A549 (cell line): ENCODE measurements at regions of chr20 and their contacts with region 1.

Region 1: GRCh38 chr20:50070991-50071888 is 41.7 kb downstream of the UBE2V1 start:
- DNase-seq: peak; percentile 81 to 88
- ATAC-seq: peak; percentile 96 to 97
- H3K4me3 ChIP-seq: peak overlapping the region; percentile 38
- H3K27ac ChIP-seq: peak overlapping the region; percentile 81 to 89
- H3K4me1 ChIP-seq: peaks cover 19% of the 10 kb centered on the region; the same call in 2 of the 3 replicates
- CTCF ChIP-seq: peak; percentile 98
- EP300 ChIP-seq: no peak
- POLR2A ChIP-seq: no peak
- RAD21 ChIP-seq: peak; percentile 99 to 100

Region 2: DNA sequence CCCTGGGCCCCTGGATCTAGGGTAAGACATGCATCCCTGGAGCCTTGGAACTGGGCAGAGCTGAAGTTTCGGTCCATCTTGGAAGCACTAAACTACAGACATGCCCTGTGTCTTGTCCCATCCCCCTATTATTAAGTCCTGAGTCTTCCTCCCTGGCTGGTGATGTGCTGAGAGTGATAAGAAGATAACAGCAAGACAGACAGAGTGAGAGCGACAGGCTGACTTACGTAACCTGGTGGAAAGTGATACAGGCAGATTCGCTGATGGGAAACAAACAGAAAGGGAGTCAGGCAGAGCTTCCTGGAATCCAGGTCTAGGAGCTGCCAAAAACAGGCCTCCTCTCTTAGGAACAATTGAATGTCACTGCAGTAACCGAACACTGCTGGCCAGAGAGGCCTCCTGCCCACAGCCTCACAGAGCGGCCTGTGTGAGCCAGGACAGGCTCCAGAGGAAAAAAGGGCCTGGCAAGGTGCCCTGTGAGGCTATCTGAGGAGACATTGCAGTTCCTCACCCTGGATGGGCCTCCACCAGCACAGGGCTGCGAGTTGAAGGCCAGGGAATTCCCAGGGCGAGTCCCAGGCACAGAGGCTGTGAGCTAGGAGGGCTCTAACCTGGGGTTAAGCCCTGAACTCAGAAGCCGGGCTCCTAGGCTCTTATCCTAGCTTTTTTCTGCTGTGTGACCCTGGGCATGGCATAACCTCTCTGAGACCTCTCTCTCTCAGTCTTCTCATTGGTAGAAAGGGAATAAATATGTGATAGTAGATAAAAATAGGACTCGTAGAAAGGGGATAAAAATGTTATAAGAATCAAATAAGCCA is 323.3 kb before region 1 on chr20:
- CTCF ChIA-PET with region 1: no interaction called
- POLR2A ChIA-PET with region 1: no interaction called
- DNase-seq: peak in 1 of 2 experiments; percentile 66
- ATAC-seq: peak; percentile 61 to 77
- H3K4me3 ChIP-seq: no peak overlapping the region
- H3K27ac ChIP-seq: peak overlapping the region; percentile 73 to 87
- H3K4me1 ChIP-seq: peaks cover 15% of the 10 kb centered on the region
- CTCF ChIP-seq: no peak
- EP300 ChIP-seq: no peak
- POLR2A ChIP-seq: no peak
- RAD21 ChIP-seq: no peak

Region 3: GRCh38 chr20:49948809-49949548 is 122.3 kb before region 1 on chr20:
- CTCF ChIA-PET with region 1: interaction called, 33 read pairs
- POLR2A ChIA-PET with region 1: interaction called, 3 read pairs
- DNase-seq: peak in 1 of 2 experiments; percentile 62
- ATAC-seq: peak; percentile 67 to 87
- H3K4me3 ChIP-seq: no peak overlapping the region
- H3K27ac ChIP-seq: peak overlapping the region; percentile 63 to 83; a peak in 5 of 6 replicates
- H3K4me1 ChIP-seq: peaks cover 28% of the 10 kb centered on the region
- CTCF ChIP-seq: no peak
- EP300 ChIP-seq: no peak
- POLR2A ChIP-seq: no peak
- RAD21 ChIP-seq: no peak

Region 4: GRCh38 chr20:50012282-50013263 is 58.7 kb before region 1 on chr20:
- CTCF ChIA-PET with region 1: interaction called, 43 read pairs
- POLR2A ChIA-PET with region 1: no interaction called
- DNase-seq: no peak
- ATAC-seq: no peak
- H3K4me3 ChIP-seq: no peak overlapping the region
- H3K27ac ChIP-seq: peak overlapping the region in 1 of 2 experiments; percentile 44; a peak in 2 of 6 replicates
- H3K4me1 ChIP-seq: peaks cover 7% of the 10 kb centered on the region; the same call in 2 of the 3 replicates
- CTCF ChIP-seq: no peak
- EP300 ChIP-seq: no peak
- POLR2A ChIP-seq: no peak
- RAD21 ChIP-seq: no peak

Region 5: GRCh38 chr20:50041246-50041873 is 29.9 kb before region 1 on chr20:
- CTCF ChIA-PET with region 1: interaction called, 66 read pairs
- POLR2A ChIA-PET with region 1: no interaction called
- DNase-seq: no peak
- ATAC-seq: no peak
- H3K4me3 ChIP-seq: no peak overlapping the region
- H3K27ac ChIP-seq: peak overlapping the region in 1 of 2 experiments; percentile 65; a peak in 3 of 6 replicates
- H3K4me1 ChIP-seq: peaks cover 17% of the 10 kb centered on the region
- CTCF ChIP-seq: no peak
- EP300 ChIP-seq: no peak
- POLR2A ChIP-seq: no peak
- RAD21 ChIP-seq: no peak

Region 6: DNA sequence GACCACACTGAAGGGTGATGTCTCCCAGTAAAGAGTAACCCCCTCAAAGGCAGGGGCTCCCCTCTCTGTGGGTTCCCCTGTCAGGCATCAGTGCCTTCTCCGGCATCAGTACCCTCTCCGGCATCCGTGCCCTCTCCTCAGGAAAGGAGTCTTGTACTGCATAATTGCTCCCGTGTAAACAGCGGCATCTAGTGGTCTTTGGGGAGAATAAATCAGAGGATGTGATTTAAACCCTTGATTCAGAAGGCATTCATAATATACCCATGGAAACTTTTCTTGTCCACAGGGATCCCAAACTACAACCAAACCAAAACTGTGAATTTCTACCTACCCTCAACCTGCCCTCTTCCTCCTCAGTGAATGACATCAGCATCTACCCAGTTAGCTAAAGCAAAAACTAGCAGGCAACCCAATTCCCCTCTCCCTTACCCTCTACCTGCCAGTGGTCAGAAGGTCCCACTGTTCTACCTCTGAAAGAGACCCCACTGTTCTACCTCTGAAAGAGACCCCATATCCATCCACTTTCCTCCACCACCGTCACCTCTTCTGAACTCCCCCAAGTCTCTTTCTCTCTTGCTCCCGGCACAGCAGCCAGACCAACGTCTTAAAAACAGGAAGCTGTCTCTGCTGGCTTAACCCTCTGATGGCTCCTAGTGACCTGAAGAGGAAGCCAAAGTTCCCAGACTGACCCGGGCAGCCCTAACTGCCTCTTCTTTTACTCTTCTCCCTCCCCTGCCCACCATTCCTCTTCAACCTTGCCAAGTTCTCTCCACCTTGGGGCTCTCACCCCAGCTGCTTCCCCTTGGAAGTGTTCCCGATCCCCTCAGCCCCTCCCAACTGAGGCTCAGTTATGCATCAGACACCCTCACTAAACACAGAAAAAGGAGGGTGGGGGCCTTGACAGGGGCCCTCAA is 14.5 kb after region 1 on chr20:
- CTCF ChIA-PET with region 1: interaction called, 153 read pairs
- POLR2A ChIA-PET with region 1: no interaction called
- DNase-seq: peak; percentile 70 to 81
- ATAC-seq: peak; percentile 87 to 91
- H3K4me3 ChIP-seq: no peak overlapping the region
- H3K27ac ChIP-seq: peak overlapping the region; percentile 19 to 69; a peak in 4 of 6 replicates
- H3K4me1 ChIP-seq: peaks cover 29% of the 10 kb centered on the region
- CTCF ChIP-seq: peak; percentile 92
- EP300 ChIP-seq: no peak
- POLR2A ChIP-seq: no peak
- RAD21 ChIP-seq: peak; percentile 72 to 81

Region 7: GRCh38 chr20:50165684-50166554 is 94.7 kb after region 1 on chr20:
- CTCF ChIA-PET with region 1: interaction called, 10 read pairs
- POLR2A ChIA-PET with region 1: no interaction called
- DNase-seq: peak; percentile 99 to 100
- ATAC-seq: peak; percentile 94 to 98
- H3K4me3 ChIP-seq: peak overlapping the region; percentile 30
- H3K27ac ChIP-seq: peak overlapping the region; percentile 81 to 92
- H3K4me1 ChIP-seq: peaks cover 40% of the 10 kb centered on the region
- CTCF ChIP-seq: no peak
- EP300 ChIP-seq: peak; percentile 68 to 90; a peak in 3 of 5 replicates
- POLR2A ChIP-seq: no peak
- RAD21 ChIP-seq: peak in 1 of 2 experiments; percentile 45; a peak in 2 of 5 replicates